Left colon (tissue), 2 donors: ENCODE measurements at regions of chr1 and their contacts with region 1.

Region 1: GRCh38 chr1:42529724-42530181 is 66.7 kb downstream of the CCDC30 start:
- DNase-seq: no peak
- ATAC-seq: peak; percentile 99

Region 2: GRCh38 chr1:42484382-42484781 is 45.4 kb before region 1 on chr1:
- intact Hi-C with region 1: loop called in 1 of 2 experiments (anchors 5 kb)
- DNase-seq: no peak
- ATAC-seq: no peak